Left ventricle myocardium superior (tissue), 1 donor: ENCODE measurements at regions of chr14 and their contacts with region 1.

Region 1: GRCh38 chr14:67666750-67667449 is 7.5 kb downstream of the VTI1B start:
- DNase-seq: no peak
- ATAC-seq: peak; percentile 72

Region 2: DNA sequence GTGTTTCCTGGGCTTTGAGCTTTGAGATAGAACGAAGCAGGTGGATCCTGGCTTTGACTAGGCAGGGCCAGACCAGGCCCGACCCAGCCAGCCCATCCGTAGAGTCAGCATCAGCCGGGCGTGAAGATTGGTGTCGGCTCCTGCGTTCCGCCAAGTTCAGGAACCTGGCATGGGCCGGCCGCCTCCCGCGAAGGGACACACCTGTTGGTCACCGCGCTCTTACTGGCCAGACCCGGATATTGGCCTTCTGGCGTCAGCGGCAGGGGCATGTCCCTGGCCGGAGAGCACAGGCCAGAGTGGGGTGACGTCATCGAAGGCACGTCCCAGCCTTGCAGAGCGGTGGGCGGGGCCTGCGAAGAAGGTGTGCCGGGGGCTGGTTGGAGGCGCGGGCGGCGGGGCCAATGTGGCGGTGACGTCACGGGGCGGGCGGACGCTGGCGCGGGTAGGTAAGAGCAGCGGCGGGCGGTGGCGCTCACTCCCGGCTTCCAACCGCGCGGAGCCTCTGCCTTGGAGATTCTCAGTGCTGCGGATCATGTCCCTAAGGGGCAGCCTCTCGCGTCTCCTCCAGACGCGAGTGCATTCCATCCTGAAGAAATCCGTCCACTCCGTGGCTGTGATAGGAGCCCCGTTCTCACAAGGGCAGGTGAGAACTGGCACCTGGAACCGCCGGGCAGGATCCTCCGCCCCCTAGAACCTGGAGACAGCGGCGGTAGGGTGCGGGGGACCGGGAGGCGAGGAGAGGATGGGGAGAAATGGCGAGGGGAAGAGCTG is 47.3 kb before region 1 on chr14 and contains the start of gene ARG2:
- intact Hi-C with region 1: loop called (anchors 5 kb)
- DNase-seq: peak; percentile 99
- ATAC-seq: peak; percentile 99
- total RNA-seq, gene ARG2: 0.99 TPM

Region 3: GRCh38 chr14:67636361-67636919 is 30.5 kb before region 1 on chr14:
- intact Hi-C with region 1: no loop called
- DNase-seq: no peak
- ATAC-seq: peak; percentile 97